ENCODE measurements at regions of chr6 and their contacts with region 1.

Region 1: GRCh38 chr6:43769526-43770416 is at the start of gene VEGFA:
- DNase-seq: peak; percentile 97
- ATAC-seq: peak; percentile 84
- total RNA-seq, gene VEGFA: 155 TPM

Region 2: GRCh38 chr6:43667245-43668150 is 102.3 kb before region 1 on chr6:
- intact Hi-C with region 1: loop called (anchors 5 kb)
- DNase-seq: peak; percentile 91
- ATAC-seq: peak; percentile 59

Region 3: DNA sequence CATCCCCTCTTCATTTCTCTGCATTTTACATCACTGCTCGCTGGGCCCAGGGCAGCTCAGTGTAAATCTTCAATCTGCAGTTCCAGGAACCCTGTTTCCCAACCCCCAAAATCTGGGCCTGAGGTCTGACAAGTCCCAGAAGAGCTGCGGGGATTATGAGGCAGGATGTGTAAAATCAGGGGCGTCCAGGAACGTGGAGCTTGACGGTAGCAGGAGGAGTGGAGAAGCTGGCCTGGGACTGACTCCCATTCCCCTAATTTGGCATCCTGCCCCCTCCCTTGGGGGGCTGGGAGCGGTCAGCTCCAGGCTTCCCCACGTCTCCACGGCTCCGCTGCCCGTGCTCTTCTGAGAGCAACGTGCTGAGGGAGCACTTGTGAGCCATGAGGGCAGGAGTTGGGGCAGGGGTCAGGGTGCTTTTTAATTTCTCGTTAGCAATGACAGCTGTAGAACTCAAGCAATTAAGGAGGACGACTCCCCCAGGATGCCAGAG is 23.1 kb before region 1 on chr6:
- intact Hi-C with region 1: no loop called
- DNase-seq: peak; percentile 60
- ATAC-seq: peak; percentile 48

Region 4: DNA sequence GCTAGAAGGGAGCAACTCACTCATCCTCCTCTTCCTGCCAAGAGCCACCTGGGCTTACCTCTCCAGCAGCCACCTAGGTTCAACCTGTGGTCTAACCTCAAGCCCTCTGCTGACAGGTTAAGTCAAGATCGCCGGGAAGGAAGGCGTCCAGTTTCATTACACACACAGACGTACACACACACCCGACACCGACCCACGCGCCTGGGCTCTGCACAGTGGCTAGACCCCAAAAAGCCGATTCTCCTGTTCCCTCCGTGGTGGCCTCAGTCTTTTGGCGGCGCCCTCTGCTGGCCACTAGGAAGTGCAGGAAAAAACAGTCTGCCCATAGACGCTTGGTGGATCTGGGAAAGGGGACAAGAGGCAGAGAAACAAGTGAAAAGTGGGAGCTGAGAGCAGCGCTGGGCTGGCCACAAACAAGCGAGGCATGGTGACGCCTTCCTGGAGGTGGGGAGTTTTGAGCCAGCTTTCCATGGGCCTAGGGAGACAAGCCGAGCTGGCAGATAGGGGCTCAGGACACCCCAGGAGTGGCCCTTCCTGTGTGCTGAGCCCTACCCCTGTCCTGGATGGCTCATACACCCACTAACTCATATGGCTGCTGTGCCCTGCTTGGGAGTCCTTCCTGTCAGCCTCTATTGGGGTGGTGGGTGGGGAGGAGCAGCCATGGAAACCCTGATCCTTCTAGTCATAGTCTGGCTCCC is 304.8 kb after region 1 on chr6:
- intact Hi-C with region 1: loop called (anchors 2 kb)
- DNase-seq: peak; percentile 85
- ATAC-seq: peak; percentile 75

Region 5: DNA sequence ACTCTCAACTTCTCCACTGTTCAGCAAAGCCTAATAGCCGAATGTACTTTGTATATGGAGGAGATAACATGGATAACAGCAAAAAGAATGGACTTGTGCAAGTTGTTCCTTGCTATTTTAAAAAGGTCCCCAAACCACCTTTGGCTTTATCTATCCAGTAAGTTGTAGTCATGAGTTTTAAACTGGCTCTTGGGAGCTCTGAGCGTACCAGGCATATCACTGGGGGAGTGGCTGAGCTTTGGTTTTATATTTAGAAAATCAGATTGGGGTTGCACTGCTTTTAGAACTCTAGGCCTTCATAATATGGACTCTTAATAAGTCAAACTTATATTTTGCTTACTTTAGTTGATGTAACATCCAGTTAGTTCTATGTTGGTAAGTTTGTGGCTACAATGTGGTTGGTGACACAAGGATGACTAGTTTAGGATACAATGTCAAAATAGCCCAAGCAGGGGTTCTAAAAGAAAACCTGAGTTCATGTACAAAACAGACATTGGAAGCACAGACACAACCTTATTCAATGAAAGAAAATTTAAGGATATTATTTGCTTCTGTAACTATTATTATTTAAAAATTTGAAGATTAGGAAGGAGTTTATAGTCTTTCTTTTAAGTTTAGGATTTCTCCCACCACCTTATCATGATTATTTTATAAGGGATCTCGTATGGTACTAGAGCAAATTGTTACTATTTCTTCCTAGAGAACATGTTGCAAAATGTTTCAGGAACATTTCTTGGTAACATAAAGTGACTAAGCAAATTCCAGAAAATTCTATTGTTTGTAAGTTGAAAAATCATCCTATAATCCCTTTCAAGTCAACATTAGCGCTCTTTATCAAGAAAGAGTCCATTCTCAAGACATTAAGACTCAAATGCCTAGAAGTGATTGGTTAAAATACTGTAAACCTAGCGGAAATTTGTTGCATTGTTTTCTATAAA is 1773.8 kb after region 1 on chr6:
- intact Hi-C with region 1: loop called (anchors 5 kb)
- DNase-seq: no peak
- ATAC-seq: no peak